ENCODE measurements at regions of chr12 and their contacts with region 1.

Region 1: GRCh38 chr12:18313306-18313705 is 52.0 kb downstream of the PIK3C2G start:
- DNase-seq: no peak
- ATAC-seq: no peak

Region 2: DNA sequence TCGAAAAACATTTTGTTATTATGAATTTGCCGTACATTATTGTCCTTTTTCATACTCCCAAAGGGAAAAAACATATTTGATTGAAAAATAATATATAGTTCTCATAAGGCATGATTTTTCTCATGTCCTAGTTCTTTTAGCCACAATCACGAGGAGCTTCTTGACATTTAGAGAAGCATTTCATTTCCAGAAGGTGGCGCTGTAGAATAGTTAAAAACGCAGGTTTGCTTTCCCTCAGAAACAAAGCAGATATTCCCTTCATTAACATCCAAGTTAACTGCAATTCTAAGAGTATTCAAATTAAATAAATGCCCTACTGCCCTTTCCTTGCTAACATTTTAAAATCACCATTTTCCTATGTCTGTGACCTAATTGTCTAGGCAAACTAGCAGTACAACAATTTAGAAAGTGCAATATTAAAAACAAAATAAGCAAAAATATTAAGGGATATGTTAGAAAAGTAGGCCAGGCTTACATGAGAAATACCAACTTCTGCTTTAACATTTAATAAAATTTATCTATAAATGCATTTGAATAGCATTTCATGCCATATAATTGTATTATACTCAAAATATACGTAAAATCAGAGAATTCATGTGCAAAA is 62.9 kb before region 1 on chr12:
- intact Hi-C with region 1: loop called (anchors 10 kb)
- DNase-seq: no peak
- ATAC-seq: no peak